ENCODE measurements at regions of chr19 and their contacts with region 1.

Region 1: GRCh38 chr19:3185482-3186376 is at the start of gene NCLN:
- DNase-seq: peak; percentile 96
- ATAC-seq: peak; percentile 88 to 96 (median 91)
- H3K4me3 ChIP-seq: peak within 1 kb of the TSS; percentile 77
- H3K4me3 Mint-ChIP-seq: peak within 1 kb of the TSS; percentile 95
- H3K27ac ChIP-seq: peak within 1 kb of the TSS; percentile 72
- H3K27ac Mint-ChIP-seq: peak within 1 kb of the TSS; percentile 93 to 94
- H3K4me1 ChIP-seq: peaks cover 80% of the 10 kb centered on the region
- H3K4me1 Mint-ChIP-seq: peaks cover 31 to 60% of the 10 kb centered on the region in 2 donors
- H3K27me3 ChIP-seq: no peaks in the 10 kb centered on the region
- H3K27me3 Mint-ChIP-seq: no peaks in the 10 kb centered on the region
- CTCF ChIP-seq: no peak
- total RNA-seq, gene NCLN: 39.6 to 61.4 (median 49.0) TPM

Region 2: DNA sequence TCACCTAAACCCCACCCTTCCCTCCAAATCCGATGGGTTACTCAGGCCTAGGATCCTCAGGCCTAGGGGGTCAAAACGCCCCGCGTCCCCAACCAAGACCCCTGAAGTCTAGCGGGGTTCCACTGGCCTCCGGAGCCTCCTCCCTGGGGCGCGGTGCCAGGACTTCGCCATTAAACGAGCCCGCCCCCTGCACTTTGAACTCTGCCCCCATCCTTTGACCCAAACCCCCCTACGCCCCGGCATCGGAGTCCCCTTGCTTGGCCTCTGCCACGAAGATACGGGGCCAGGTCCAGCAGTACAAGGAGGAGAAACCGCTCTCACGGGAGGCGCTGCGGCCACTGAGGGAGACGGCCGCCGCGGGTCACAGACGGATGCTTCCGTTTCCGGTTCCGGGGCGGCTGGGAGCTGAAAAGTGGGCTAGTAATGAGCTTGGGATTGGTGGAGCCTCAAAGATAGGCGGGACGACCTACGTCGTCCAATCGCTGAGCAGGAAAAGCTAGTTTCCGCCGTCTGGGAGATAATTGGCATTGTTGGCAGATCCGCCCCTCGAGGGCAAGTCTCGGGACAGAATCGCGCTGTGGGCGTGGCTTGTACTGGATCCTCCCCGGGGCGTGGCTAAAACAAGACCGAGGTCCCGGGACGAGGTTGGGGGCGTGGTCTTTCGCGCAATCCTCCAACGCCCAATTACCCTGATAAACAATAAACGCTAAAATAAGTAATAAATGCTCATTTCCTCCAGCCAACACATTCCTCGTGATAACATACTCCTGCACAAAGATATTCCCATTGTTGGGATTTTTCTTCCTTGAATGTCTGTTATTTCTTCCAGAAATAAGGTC is 235.2 kb before region 1 on chr19:
- intact Hi-C with region 1: loop called (anchors 10 kb)
- DNase-seq: peak; percentile 100
- ATAC-seq: peak; percentile 90 to 97 (median 94)
- H3K4me3 ChIP-seq: peak overlapping the region; percentile 68
- H3K4me3 Mint-ChIP-seq: peak overlapping the region; percentile 95
- H3K27ac ChIP-seq: peak overlapping the region; percentile 92
- H3K27ac Mint-ChIP-seq: peak overlapping the region; percentile 97 to 99
- H3K4me1 ChIP-seq: peaks cover 17% of the 10 kb centered on the region
- H3K4me1 Mint-ChIP-seq: peaks cover 24 to 25% of the 10 kb centered on the region in 2 donors
- H3K27me3 ChIP-seq: no peaks in the 10 kb centered on the region
- H3K27me3 Mint-ChIP-seq: no peaks in the 10 kb centered on the region
- CTCF ChIP-seq: no peak

Region 3: DNA sequence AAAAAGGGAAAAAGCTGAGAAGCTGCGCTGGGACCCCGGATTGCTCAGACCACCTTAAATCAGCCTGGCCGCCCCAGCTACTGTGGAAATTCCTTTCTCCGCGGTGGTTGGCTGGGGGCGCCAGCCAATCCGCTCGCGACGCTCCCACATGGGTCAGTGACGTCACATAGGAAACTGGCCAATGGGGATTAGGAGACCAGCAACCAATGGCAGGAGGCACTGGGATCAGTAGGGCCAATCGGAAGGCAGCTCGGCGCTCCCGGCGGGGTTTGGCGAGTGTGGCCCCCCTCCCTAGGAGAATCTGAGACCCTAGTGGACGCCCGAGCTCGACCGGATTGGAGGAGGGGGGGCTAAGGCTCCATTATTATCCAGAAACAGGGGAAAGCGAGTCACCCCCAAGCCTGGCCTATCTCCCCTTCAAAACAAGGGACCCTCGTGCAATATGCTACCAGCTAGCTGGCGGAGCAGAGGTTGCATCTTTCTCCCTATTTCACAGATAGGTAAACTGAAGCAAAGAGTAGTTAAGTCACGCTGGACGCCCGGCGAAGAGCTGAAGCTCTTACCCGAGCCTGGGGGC is 150.1 kb before region 1 on chr19:
- intact Hi-C with region 1: no loop called
- DNase-seq: peak; percentile 90 to 99
- ATAC-seq: peak; percentile 87 to 96 (median 92)
- H3K4me3 ChIP-seq: peak overlapping the region; percentile 49
- H3K4me3 Mint-ChIP-seq: peak overlapping the region; percentile 95
- H3K27ac ChIP-seq: peak overlapping the region; percentile 75
- H3K27ac Mint-ChIP-seq: peak overlapping the region; percentile 95
- H3K4me1 ChIP-seq: peaks cover 22% of the 10 kb centered on the region
- H3K4me1 Mint-ChIP-seq: peaks cover 18 to 31% of the 10 kb centered on the region in 2 donors
- H3K27me3 ChIP-seq: no peaks in the 10 kb centered on the region
- H3K27me3 Mint-ChIP-seq: peaks cover 0 to 10% of the 10 kb centered on the region in 2 donors
- CTCF ChIP-seq: no peak

Region 4: DNA sequence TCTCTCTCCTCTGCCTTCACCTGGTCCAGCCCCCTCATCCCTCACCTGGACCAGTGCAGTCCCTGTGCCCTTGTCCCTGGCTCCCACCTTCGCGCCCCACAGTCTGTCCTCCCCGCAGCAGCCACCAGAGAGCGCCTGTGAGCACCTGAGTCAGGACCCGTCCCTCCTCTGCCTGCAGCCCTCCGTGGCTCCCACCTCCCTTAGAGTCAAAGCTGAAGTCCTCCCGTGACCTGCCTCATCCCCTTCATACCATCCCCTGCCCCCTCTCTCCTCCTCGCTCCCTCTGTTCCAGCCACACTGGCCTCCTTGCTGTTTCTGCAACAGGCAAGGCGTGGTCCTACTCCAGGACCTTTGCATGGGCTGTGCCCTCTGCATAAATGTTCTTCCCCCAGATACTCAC is 49.1 kb after region 1 on chr19:
- intact Hi-C with region 1: no loop called
- DNase-seq: no peak
- ATAC-seq: no peak
- H3K4me3 ChIP-seq: no peak overlapping the region
- H3K4me3 Mint-ChIP-seq: no peak overlapping the region
- H3K27ac ChIP-seq: no peak overlapping the region
- H3K27ac Mint-ChIP-seq: no peak overlapping the region
- H3K4me1 ChIP-seq: no peaks in the 10 kb centered on the region
- H3K4me1 Mint-ChIP-seq: no peaks in the 10 kb centered on the region
- H3K27me3 ChIP-seq: peaks cover 3% of the 10 kb centered on the region
- H3K27me3 Mint-ChIP-seq: peaks cover 0 to 16% of the 10 kb centered on the region in 2 donors
- CTCF ChIP-seq: no peak

Region 5: DNA sequence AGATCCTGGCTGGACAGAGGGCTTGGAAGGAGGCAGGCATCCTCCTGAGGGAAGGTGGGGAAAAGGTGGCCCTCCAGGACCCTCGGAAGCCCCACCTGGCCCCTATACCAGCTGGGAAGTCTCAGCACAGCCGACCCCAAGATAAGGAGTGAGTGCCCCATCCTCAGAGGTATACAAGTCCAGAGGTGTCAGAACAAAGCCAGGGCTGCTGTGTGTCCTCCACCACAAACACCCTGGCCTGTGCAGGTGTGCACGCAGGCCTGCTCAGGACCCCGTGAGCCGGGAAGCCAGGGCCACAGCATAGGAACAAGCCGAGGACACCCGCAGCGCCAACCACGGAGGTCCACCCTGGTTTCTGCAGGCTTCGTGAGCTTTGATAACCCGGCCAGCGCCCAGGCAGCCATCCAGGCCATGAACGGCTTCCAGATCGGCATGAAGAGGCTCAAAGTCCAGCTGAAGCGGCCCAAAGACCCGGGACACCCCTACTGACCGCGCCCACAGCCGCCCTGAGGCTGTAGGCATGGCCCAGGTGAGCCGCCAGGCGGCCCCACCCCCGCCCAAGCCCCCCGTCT is 107.3 kb after region 1 on chr19:
- intact Hi-C with region 1: no loop called
- DNase-seq: no peak
- ATAC-seq: no peak
- H3K4me3 ChIP-seq: no peak overlapping the region
- H3K4me3 Mint-ChIP-seq: no peak overlapping the region
- H3K27ac ChIP-seq: no peak overlapping the region
- H3K27ac Mint-ChIP-seq: no peak overlapping the region
- H3K4me1 ChIP-seq: no peaks in the 10 kb centered on the region
- H3K4me1 Mint-ChIP-seq: no peaks in the 10 kb centered on the region
- H3K27me3 ChIP-seq: no peaks in the 10 kb centered on the region
- H3K27me3 Mint-ChIP-seq: peaks cover 0 to 2% of the 10 kb centered on the region in 2 donors
- CTCF ChIP-seq: no peak

Region 6: GRCh38 chr19:3423183-3423829 is 237.6 kb after region 1 on chr19:
- intact Hi-C with region 1: no loop called
- DNase-seq: no peak
- ATAC-seq: no peak
- H3K4me3 ChIP-seq: no peak overlapping the region
- H3K4me3 Mint-ChIP-seq: no peak overlapping the region
- H3K27ac ChIP-seq: no peak overlapping the region
- H3K27ac Mint-ChIP-seq: no peak overlapping the region
- H3K4me1 ChIP-seq: no peaks in the 10 kb centered on the region
- H3K4me1 Mint-ChIP-seq: peaks cover 0 to 4% of the 10 kb centered on the region in 2 donors
- H3K27me3 ChIP-seq: no peaks in the 10 kb centered on the region
- H3K27me3 Mint-ChIP-seq: no peaks in the 10 kb centered on the region
- CTCF ChIP-seq: no peak

Region 7: DNA sequence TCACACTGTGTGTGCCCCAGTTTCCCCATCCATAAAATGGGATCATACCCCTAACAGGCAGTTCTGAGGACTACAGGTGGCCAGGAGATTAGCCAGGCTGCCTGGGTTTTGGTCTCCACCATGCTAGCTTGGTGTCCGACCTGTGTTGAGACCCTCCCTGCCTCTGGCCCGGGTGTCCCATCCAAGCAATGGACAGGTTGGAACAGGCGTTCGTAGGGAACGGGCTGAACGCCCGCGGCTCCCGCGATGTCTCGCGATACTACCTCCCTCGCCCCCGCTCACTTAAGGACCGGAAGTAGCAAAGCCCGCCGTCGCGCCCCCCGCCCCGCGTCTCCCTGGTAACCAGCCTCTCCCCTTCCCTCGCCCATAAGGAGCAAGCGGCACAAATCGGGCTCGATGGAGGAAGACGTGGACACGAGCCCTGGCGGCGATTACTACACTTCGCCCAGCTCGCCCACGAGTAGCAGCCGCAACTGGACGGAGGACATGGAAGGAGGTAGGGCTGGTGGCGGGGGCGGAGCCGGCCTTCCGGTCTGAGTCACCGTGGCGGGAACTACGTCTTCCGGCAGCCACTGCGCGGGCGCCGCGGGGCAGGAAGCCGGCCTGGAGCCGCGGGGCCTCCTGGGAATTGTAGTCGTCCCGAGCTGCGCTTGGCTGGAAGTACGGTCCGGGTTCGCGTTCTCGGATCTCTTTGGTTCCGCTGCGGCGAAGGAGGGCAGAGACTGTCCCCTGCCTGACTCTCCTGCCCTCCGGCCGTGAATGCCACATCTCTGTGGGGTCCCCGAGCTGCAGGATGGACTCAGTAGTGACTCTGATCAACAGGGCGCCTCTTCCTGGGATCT is 249.2 kb after region 1 on chr19:
- intact Hi-C with region 1: loop called (anchors 10 kb)
- DNase-seq: peak; percentile 96
- ATAC-seq: peak; percentile 97 to 99 (median 97)
- H3K4me3 ChIP-seq: peak overlapping the region; percentile 83
- H3K4me3 Mint-ChIP-seq: peak overlapping the region; percentile 91
- H3K27ac ChIP-seq: peak overlapping the region; percentile 84
- H3K27ac Mint-ChIP-seq: peak overlapping the region; percentile 92 to 96
- H3K4me1 ChIP-seq: peaks cover 14% of the 10 kb centered on the region
- H3K4me1 Mint-ChIP-seq: peaks cover 7 to 20% of the 10 kb centered on the region in 2 donors
- H3K27me3 ChIP-seq: no peaks in the 10 kb centered on the region
- H3K27me3 Mint-ChIP-seq: no peaks in the 10 kb centered on the region
- CTCF ChIP-seq: no peak